ENCODE measurements at regions of chr20 and their contacts with region 1.

Region 1: DNA sequence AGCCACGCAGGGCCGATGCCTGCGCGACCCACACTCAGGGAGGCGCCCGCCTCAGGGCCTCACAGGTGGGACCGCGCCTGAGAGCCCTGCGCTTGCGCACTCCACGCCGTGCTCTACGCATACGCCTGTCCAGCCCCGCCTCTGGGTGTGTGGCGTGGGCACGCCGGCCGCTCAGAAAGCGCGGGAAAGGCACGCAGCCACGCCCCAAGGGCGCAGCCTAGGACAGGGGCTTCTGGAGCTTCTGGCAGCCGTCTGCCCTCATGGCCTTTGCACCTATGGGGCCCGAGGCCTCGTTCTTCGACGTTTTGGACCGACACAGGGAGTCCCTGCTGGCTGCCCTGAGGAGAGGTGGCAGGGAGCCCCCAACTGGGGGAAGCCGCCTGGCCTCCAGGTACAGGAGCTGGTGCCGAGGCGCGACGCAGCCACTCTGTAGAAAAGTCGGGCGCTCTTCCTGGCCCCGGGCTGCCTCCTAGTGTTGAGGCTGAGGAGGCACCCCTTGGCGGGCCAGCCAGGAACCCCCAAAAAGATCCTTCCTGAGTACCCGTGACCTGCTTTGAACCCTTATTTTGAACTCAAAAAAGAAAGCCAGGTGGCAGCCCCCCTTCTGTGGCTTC is at the start of gene SPO11:
- DNase-seq: peak; percentile 38 to 78
- H3K4me3 ChIP-seq: no peak within 1 kb of the TSS
- H3K27ac ChIP-seq: no peak within 1 kb of the TSS
- H3K4me1 ChIP-seq: peaks cover 0 to 7% (median 2%) of the 10 kb centered on the region in 4 experiments; a peak in 1 of 7 replicates
- H3K27me3 ChIP-seq: peaks cover 0 to 3% (median 0%) of the 10 kb centered on the region in 4 experiments; a peak in 2 of 7 replicates
- CTCF ChIP-seq: peak; percentile 74 to 90 (median 81)
- EP300 ChIP-seq: no peak
- POLR2A ChIP-seq: no peak
- RAD21 ChIP-seq: peak; percentile 89 to 92
- total RNA-seq, gene SPO11: not detected in 2 replicates

Region 2: DNA sequence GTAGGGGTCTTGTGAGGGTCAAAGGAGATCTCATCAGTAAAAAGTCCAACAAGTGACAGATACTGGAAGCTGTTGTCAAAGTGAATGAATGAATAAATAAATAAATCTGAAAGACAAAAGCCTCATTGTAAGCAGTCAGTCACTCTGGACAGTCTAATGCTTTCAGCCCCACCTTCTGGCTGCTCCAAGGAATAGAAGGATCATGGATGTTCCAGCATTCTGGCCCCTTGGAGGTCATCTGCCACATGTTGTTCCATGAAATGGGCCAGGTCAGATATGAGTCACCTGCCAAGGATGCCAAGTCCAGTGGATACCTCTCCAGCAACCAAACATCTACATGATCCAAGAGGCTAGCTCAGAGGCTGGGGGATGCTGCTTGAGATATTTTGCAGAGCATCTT is 248.9 kb before region 1 on chr20:
- CTCF ChIA-PET with region 1: interaction called, 37 read pairs
- POLR2A ChIA-PET with region 1: no interaction called
- DNase-seq: no peak
- H3K4me3 ChIP-seq: no peak overlapping the region
- H3K27ac ChIP-seq: no peak overlapping the region
- H3K4me1 ChIP-seq: no peaks in the 10 kb centered on the region
- H3K27me3 ChIP-seq: no peaks in the 10 kb centered on the region
- CTCF ChIP-seq: peak in 2 of 3 experiments; percentile 32 to 40; a peak in 1 of 4 replicates
- EP300 ChIP-seq: no peak
- POLR2A ChIP-seq: no peak
- RAD21 ChIP-seq: peak; percentile 51 to 62

Region 3: DNA sequence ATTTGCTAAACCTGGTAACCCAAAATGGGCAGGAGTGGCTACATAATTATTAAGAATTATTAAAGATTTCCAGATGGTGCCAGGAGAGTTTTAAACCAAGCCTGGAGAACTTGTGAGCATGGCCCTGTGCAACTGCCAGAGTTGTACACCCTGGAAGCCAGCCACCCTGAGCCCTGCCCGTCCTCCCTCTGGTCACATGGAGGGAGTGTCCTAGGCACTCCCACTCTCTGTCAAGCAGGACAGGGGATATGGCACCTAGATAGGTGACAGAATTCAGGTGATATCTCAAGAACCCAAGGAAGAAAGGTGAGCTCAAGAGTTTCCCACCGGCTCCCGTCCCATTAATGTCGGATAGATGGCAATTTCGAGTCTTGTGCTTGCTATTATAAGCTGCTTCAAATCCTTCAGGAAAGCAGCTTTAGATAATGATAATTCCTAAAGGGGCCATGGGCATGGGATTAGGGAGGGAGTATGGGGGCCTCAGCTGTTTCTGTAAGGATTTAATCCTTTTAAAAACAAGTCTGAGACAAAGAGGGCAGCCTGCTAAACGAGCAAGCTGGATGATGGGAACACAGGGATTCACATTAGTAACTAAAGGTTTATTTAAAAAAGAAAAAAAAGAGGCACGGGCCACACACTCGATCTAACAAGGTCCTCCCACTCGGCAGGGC is 232.3 kb before region 1 on chr20:
- CTCF ChIA-PET with region 1: interaction called, 150 read pairs
- POLR2A ChIA-PET with region 1: no interaction called
- DNase-seq: no peak
- H3K4me3 ChIP-seq: no peak overlapping the region
- H3K27ac ChIP-seq: no peak overlapping the region
- H3K4me1 ChIP-seq: no peaks in the 10 kb centered on the region; a peak in 1 of 7 replicates
- H3K27me3 ChIP-seq: peaks cover 0 to 2% (median 0%) of the 10 kb centered on the region in 4 experiments; a peak in 1 of 7 replicates
- CTCF ChIP-seq: no peak
- EP300 ChIP-seq: no peak
- POLR2A ChIP-seq: no peak
- RAD21 ChIP-seq: no peak

Region 4: DNA sequence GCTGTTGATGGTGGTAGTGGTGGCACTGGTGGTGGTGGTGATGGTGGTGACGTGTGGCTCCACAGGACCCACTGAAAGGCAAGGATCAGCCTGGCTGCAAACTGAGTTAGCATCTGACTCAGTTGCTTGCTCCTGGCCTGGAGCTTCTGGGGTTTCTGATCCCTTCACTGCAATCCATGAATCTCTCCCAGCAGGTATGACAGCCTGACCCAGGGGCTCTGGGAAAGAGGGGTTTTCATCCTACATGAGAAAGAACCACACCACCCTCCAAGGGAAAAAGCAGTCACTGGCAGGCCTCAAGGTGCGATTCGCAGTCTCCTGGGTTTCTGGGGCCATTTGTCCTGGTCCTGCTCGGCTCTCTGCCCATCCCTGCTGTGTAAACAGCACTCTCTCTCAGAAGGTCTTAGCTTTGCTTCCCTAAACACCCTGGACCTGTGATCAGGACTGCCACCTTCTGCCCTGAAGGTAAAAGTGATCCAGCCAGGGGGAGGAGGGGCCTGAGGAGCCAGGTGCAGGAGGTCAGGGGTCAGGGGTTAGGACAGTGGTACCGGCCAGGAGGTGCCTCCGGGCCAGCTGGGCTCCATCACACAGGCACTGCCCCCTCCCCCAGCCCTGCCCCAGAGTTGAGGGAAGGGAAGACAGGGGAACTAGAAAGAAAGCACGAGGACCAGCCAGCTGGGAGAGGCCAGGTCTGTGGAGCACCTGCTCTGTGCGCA is 215.3 kb before region 1 on chr20:
- CTCF ChIA-PET with region 1: interaction called, 16 read pairs
- POLR2A ChIA-PET with region 1: no interaction called
- DNase-seq: no peak
- H3K4me3 ChIP-seq: no peak overlapping the region
- H3K27ac ChIP-seq: no peak overlapping the region
- H3K4me1 ChIP-seq: peaks cover 0 to 7% (median 0%) of the 10 kb centered on the region in 4 experiments; a peak in 2 of 7 replicates
- H3K27me3 ChIP-seq: peaks cover 0 to 2% (median 0%) of the 10 kb centered on the region in 4 experiments; a peak in 1 of 7 replicates
- CTCF ChIP-seq: peak in 1 of 3 experiments; percentile 3; a peak in 1 of 4 replicates
- EP300 ChIP-seq: no peak
- POLR2A ChIP-seq: no peak
- RAD21 ChIP-seq: peak in 1 of 2 experiments; percentile 12; a peak in 1 of 4 replicates

Region 5: DNA sequence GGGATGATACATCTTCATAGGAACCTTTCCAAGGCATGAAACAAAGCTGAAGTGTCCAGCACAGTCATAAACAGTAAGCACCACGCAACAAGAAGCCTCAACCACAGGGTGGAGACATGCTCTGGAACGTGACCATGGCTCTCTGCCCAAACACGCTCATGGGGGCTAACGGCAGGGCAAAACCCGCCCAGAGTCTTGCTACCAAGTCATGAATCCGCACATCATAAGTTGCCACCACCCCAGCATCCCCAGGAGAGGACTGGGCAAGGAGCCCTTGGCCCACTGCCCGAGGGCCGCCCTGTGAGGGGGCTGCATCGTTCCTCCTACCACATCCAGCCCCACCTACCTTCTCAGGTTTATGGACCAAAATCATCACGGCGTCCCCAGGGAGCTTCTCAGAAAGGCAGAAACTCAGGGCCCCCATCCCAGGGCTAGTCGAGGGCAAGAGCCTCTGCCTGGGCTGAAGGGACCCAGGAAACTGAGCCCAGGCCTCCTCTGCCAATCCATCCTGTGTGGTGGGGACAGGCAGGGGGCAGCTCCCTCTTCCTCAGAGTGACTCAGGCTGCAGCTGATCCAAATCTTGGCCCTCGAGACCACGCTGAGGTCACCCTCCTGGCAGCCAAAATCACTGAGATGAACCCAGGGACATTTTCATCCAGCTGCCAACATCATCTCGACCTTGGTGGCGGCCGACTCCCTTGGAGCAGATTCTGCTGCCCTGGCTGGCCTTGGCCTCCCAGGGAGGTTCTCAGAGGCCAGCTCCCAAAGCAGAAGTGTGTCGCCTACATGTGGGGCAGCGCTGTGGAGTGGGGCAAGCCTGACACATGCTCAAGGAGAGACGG is 105.8 kb before region 1 on chr20:
- CTCF ChIA-PET with region 1: interaction called, 26 read pairs
- POLR2A ChIA-PET with region 1: no interaction called
- DNase-seq: no peak
- H3K4me3 ChIP-seq: no peak overlapping the region
- H3K27ac ChIP-seq: no peak overlapping the region
- H3K4me1 ChIP-seq: no peaks in the 10 kb centered on the region; a peak in 1 of 7 replicates
- H3K27me3 ChIP-seq: no peaks in the 10 kb centered on the region; a peak in 1 of 7 replicates
- CTCF ChIP-seq: peak in 2 of 3 experiments; percentile 19 to 21; a peak in 2 of 4 replicates
- EP300 ChIP-seq: no peak
- POLR2A ChIP-seq: no peak
- RAD21 ChIP-seq: peak; percentile 20 to 36; a peak in 3 of 4 replicates

Region 6: DNA sequence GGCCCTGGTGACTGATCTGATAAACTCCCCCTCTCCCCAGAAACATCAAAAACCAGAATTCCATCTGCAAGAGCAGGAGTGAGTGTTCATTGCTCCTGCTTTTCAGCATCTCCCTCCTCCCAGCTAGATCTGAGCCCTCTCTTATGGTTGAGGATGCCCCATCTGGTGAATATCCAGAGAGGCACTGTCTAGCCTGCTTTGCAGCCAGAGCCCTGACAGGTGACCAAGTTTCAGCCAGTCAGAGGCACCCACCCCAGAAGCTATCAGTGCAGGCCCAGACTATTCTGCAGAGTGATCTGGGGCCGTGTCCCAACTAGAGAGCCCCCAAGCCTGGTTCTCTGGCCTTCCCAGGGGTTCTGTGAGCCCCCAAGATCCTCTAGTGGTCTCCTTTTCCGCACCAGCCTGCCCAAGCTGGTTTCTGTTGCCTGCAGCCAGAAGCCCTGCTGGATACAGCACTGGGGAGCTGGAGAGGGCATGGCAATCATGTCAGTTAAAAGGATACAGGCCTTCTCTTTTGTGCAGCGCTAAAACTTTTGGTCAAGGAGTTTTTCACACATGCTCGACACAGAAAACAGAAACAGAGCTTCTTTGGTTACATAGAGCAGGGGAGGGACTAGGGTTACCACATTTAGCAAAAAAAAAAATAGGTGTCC is 56.7 kb before region 1 on chr20:
- CTCF ChIA-PET with region 1: interaction called, 12 read pairs
- POLR2A ChIA-PET with region 1: no interaction called
- DNase-seq: no peak
- H3K4me3 ChIP-seq: no peak overlapping the region
- H3K27ac ChIP-seq: no peak overlapping the region
- H3K4me1 ChIP-seq: peaks cover 7 to 21% (median 13%) of the 10 kb centered on the region in 4 experiments; a peak in 6 of 7 replicates
- H3K27me3 ChIP-seq: peaks cover 9 to 34% (median 27%) of the 10 kb centered on the region in 4 experiments
- CTCF ChIP-seq: no peak
- EP300 ChIP-seq: no peak
- POLR2A ChIP-seq: no peak
- RAD21 ChIP-seq: peak in 1 of 2 experiments; percentile 10; a peak in 2 of 4 replicates

Region 7: GRCh38 chr20:57317789-57318371 is 11.8 kb before region 1 on chr20:
- CTCF ChIA-PET with region 1: interaction called, 14 read pairs
- POLR2A ChIA-PET with region 1: no interaction called
- DNase-seq: no peak
- H3K4me3 ChIP-seq: no peak overlapping the region
- H3K27ac ChIP-seq: no peak overlapping the region
- H3K4me1 ChIP-seq: peaks cover 0 to 2% (median under 1%) of the 10 kb centered on the region in 4 experiments; a peak in 1 of 7 replicates
- H3K27me3 ChIP-seq: peaks cover 0 to 2% (median 0%) of the 10 kb centered on the region in 4 experiments; a peak in 2 of 7 replicates
- CTCF ChIP-seq: no peak
- EP300 ChIP-seq: no peak
- POLR2A ChIP-seq: no peak
- RAD21 ChIP-seq: no peak

Region 8: GRCh38 chr20:57374931-57375651 is 45.4 kb after region 1 on chr20:
- CTCF ChIA-PET with region 1: no interaction called
- POLR2A ChIA-PET with region 1: no interaction called
- DNase-seq: no peak
- H3K4me3 ChIP-seq: no peak overlapping the region
- H3K27ac ChIP-seq: 0 out of 2 replicates have a peak overlapping the region, but pooled peaks have one; percentile 4
- H3K4me1 ChIP-seq: peaks cover 0 to 10% (median 3%) of the 10 kb centered on the region in 4 experiments; a peak in 3 of 7 replicates
- H3K27me3 ChIP-seq: no peaks in the 10 kb centered on the region; a peak in 1 of 7 replicates
- CTCF ChIP-seq: no peak
- EP300 ChIP-seq: no peak
- POLR2A ChIP-seq: no peak
- RAD21 ChIP-seq: no peak

Region 9: GRCh38 chr20:57398231-57398821 is 68.6 kb after region 1 on chr20:
- CTCF ChIA-PET with region 1: no interaction called
- POLR2A ChIA-PET with region 1: no interaction called
- DNase-seq: no peak
- H3K4me3 ChIP-seq: no peak overlapping the region
- H3K27ac ChIP-seq: no peak overlapping the region
- H3K4me1 ChIP-seq: peaks cover 0 to 12% (median 6%) of the 10 kb centered on the region in 4 experiments; a peak in 6 of 7 replicates
- H3K27me3 ChIP-seq: no peaks in the 10 kb centered on the region
- CTCF ChIP-seq: no peak
- EP300 ChIP-seq: no peak
- POLR2A ChIP-seq: no peak
- RAD21 ChIP-seq: no peak